ENCODE measurements at regions of chr17 and their contacts with region 1.

Region 1: DNA sequence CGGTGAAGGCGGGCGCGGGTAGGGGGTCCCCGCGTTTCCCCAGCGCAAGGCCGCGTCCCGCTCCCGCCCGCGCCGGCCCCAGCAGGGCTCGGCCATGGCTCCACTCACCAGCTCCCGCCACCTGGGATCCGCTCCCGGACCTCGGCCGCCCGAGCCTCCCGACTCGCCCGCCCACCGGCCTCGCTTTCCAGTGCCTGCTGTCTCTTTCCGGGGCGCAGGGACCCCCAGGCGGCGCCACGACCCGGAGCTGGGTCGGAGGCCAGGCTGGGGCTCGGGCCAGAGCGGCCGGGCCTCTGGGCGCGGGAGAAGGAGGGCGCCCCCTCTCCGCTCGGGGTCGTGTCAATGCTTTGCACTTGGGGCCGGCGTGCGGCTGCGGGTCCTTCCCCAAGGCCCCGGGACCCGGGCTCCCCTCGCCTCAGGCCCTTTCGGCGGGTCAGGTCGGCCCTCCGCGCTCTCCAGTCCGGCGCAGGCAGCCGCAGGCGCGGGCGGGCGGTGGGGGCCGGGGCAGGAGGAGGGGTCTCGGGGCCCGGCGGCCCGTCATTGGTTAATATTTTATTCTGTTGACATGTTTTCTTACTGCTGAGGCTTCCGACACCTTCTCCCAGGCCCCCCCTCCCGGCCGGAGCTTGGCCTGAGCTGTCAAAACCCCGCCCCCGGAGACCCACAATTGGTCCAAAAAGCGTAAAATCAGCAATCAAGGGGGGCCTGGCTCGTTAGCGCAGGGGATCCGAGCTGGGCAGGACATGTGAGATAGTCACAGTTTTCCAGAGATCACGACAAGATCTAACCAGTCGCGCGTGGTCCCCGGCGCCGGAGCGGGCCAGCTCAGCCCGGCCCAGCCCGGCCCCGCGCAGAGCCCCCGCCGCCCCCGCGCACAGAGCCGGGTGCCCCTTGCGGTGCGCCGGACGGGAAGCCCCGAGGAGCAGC is at the start of gene TBX2:
- DNase-seq: peak in 1 of 2 experiments; percentile 80
- H3K4me3 ChIP-seq: peak within 1 kb of the TSS in 2 of 4 experiments; percentile 6 to 53; a peak in 5 of 8 replicates
- H3K27ac ChIP-seq: no peak within 1 kb of the TSS
- H3K4me1 ChIP-seq: peaks cover 0 to 40% (median 24%) of the 10 kb centered on the region in 4 experiments; a peak in 6 of 7 replicates
- H3K27me3 ChIP-seq: peaks cover 99 to 100% (median 100%) of the 10 kb centered on the region in 4 experiments
- CTCF ChIP-seq: peak in 1 of 3 experiments; percentile 7; a peak in 1 of 4 replicates
- EP300 ChIP-seq: no peak
- POLR2A ChIP-seq: no peak
- RAD21 ChIP-seq: 0 out of 4 replicates have a peak, but pooled peaks of 1 of the 2 experiments have one; percentile 0
- total RNA-seq, gene TBX2: not detected in 2 replicates

Region 2: GRCh38 chr17:61368832-61369462 is 30.4 kb before region 1 on chr17:
- CTCF ChIA-PET with region 1: no interaction called
- POLR2A ChIA-PET with region 1: no interaction called
- DNase-seq: no peak
- H3K4me3 ChIP-seq: no peak overlapping the region
- H3K27ac ChIP-seq: no peak overlapping the region
- H3K4me1 ChIP-seq: peaks cover 0 to 3% (median 1%) of the 10 kb centered on the region in 4 experiments; a peak in 2 of 7 replicates
- H3K27me3 ChIP-seq: no peaks in the 10 kb centered on the region; a peak in 1 of 7 replicates
- CTCF ChIP-seq: no peak
- EP300 ChIP-seq: no peak
- POLR2A ChIP-seq: no peak
- RAD21 ChIP-seq: no peak

Region 3: GRCh38 chr17:61457226-61457983 is 58.0 kb after region 1 on chr17:
- CTCF ChIA-PET with region 1: interaction called, 12 read pairs
- POLR2A ChIA-PET with region 1: interaction called, 5 read pairs
- DNase-seq: peak in 1 of 2 experiments; percentile 63
- H3K4me3 ChIP-seq: peak overlapping the region; percentile 1 to 47 (median 2); a peak in 4 of 8 replicates
- H3K27ac ChIP-seq: no peak overlapping the region
- H3K4me1 ChIP-seq: peaks cover 2 to 26% (median 9%) of the 10 kb centered on the region in 4 experiments; a peak in 6 of 7 replicates
- H3K27me3 ChIP-seq: peaks cover 91 to 100% (median 97%) of the 10 kb centered on the region in 4 experiments
- CTCF ChIP-seq: no peak
- EP300 ChIP-seq: no peak
- POLR2A ChIP-seq: no peak
- RAD21 ChIP-seq: no peak